ENCODE measurements at regions of chr6 and their contacts with region 1.

Region 1: GRCh38 chr6:83974409-83975050 is 59.0 kb upstream of the MRAP2 start:
- DNase-seq: no peak
- ATAC-seq: no peak
- H3K4me3 ChIP-seq: no peak overlapping the region
- H3K27ac ChIP-seq: no peak overlapping the region
- H3K4me1 ChIP-seq: peaks cover 3 to 4% of the 10 kb centered on the region in 2 donors
- H3K27me3 ChIP-seq: no peaks in the 10 kb centered on the region

Region 2: GRCh38 chr6:83908813-83909212 is 65.7 kb before region 1 on chr6:
- intact Hi-C with region 1: loop called in 1 of 2 experiments (anchors 5 kb)
- DNase-seq: no peak
- ATAC-seq: no peak
- H3K4me3 ChIP-seq: no peak overlapping the region
- H3K27ac ChIP-seq: no peak overlapping the region
- H3K4me1 ChIP-seq: peaks cover 0 to 3% of the 10 kb centered on the region in 2 donors
- H3K27me3 ChIP-seq: no peaks in the 10 kb centered on the region

Region 3: GRCh38 chr6:84137051-84137375 is 162.5 kb after region 1 on chr6:
- intact Hi-C with region 1: no loop called
- DNase-seq: no peak
- ATAC-seq: no peak
- H3K4me3 ChIP-seq: no peak overlapping the region
- H3K27ac ChIP-seq: no peak overlapping the region
- H3K4me1 ChIP-seq: no peaks in the 10 kb centered on the region
- H3K27me3 ChIP-seq: no peaks in the 10 kb centered on the region